ENCODE measurements at regions of chr3 and their contacts with region 1.

Region 1: GRCh38 chr3:19866751-19867347 is 67.2 kb downstream of the EFHB start:
- DNase-seq: peak in 4 of 5 donors; percentile 25 to 43 (median 30)
- H3K4me3 ChIP-seq: no peak overlapping the region
- H3K4me3 Mint-ChIP-seq: no peak overlapping the region
- H3K27ac ChIP-seq: no peak overlapping the region
- H3K27ac Mint-ChIP-seq: no peak overlapping the region
- H3K4me1 ChIP-seq: no peaks in the 10 kb centered on the region
- H3K4me1 Mint-ChIP-seq: peaks cover 0 to 4% (median 3%) of the 10 kb centered on the region in 4 donors
- H3K27me3 ChIP-seq: no peaks in the 10 kb centered on the region
- H3K27me3 Mint-ChIP-seq: peaks cover 0 to 10% of the 10 kb centered on the region in 2 donors

Region 2: DNA sequence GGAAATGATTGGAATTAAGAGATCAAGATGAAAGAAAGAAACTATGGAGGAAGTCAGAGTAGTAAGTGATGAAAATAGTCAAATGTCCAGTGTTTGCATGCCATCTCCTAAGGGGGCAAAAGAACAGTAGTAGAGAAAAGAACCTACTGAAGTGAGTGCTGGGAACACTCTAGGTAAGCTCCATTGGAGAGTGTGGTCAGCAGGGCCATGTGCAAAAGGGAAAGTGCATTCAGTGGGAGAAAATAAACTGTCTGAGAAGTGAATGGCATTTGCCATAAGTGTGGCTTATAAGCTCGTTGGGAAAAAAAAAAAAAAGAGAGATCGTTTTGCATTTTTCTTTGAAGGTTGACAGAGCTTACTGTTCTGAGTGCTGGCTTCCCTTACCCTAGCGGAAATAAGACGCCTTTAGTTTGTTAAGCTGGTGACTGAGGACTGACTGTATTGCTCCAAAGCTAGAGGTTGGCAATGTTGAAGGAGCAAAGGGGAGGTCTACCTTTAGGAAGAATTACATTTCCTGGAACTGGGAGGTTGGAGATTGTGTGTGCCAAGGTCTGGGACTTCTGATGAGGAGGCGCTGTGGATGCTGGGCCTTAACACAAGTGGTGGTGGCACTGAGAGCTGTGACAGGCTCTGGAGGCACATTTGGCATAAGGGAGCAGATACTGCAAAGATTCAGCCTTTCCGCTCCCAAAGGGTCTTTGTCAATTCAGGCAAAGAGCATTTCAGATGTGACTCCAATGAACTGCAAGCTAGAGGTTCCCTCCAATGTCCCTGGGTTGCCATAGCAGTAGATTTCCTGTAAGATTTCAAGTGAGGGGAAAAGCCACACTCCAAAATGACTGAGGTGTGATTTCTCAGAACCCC is 1153.9 kb before region 1 on chr3:
- CTCF ChIA-PET with region 1: no interaction called
- POLR2A ChIA-PET with region 1: no interaction called
- intact Hi-C with region 1: no loop called
- DNase-seq: peak in 4 of 5 donors; percentile 21 to 32 (median 27)
- H3K4me3 ChIP-seq: peak overlapping the region in 1 of 2 donors; percentile 6
- H3K4me3 Mint-ChIP-seq: peak overlapping the region in 7 of 8 donors; percentile 54 to 83 (median 68)
- H3K27ac ChIP-seq: no peak overlapping the region
- H3K27ac Mint-ChIP-seq: peak overlapping the region; percentile 74 to 96 (median 87)
- H3K4me1 ChIP-seq: peaks cover 52% of the 10 kb centered on the region
- H3K4me1 Mint-ChIP-seq: peaks cover 50 to 60% (median 53%) of the 10 kb centered on the region in 4 donors
- H3K27me3 ChIP-seq: no peaks in the 10 kb centered on the region
- H3K27me3 Mint-ChIP-seq: no peaks in the 10 kb centered on the region

Region 3: GRCh38 chr3:19046440-19046839 is 820.4 kb before region 1 on chr3:
- CTCF ChIA-PET with region 1: no interaction called
- POLR2A ChIA-PET with region 1: no interaction called
- intact Hi-C with region 1: loop called (anchors 1 kb)
- DNase-seq: no peak
- H3K4me3 ChIP-seq: no peak overlapping the region
- H3K4me3 Mint-ChIP-seq: no peak overlapping the region
- H3K27ac ChIP-seq: no peak overlapping the region
- H3K27ac Mint-ChIP-seq: no peak overlapping the region
- H3K4me1 ChIP-seq: no peaks in the 10 kb centered on the region
- H3K4me1 Mint-ChIP-seq: no peaks in the 10 kb centered on the region
- H3K27me3 ChIP-seq: no peaks in the 10 kb centered on the region
- H3K27me3 Mint-ChIP-seq: peaks cover 0 to 4% of the 10 kb centered on the region in 2 donors

Region 4: DNA sequence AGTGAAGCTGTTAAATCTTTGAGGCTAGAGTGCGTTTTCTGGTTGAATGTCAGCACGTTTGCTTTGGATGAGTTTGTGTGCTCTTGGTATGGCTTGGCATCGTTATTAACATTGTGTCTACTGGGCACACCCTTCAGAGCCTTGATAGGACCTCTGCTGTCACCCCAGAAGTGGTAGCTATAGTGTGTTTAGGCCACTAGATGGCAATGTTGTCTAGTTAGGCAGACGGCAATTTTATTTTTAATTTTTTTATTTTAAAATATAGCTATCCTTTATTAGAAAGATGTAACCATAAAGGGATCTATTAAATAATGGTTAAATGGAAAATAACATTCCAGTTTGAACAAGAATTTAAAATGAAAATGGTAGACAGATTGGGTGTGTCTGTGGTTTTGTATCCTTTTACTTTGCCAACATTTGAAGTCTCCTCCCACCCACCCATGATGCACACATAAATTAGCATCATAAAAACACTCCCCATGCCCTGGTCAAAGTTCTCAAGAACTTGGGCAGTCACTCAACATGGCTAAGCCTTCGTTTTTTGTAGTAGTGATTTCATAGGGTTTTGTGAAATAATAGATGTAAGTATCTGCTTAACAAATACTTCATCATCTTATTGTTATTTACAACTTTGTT is 517.8 kb before region 1 on chr3:
- CTCF ChIA-PET with region 1: no interaction called
- POLR2A ChIA-PET with region 1: no interaction called
- intact Hi-C with region 1: loop called (anchors 5 kb)
- DNase-seq: peak in 2 of 5 donors; percentile 1 to 14
- H3K4me3 ChIP-seq: no peak overlapping the region
- H3K4me3 Mint-ChIP-seq: no peak overlapping the region
- H3K27ac ChIP-seq: no peak overlapping the region
- H3K27ac Mint-ChIP-seq: no peak overlapping the region
- H3K4me1 ChIP-seq: no peaks in the 10 kb centered on the region
- H3K4me1 Mint-ChIP-seq: peaks cover 0 to 2% (median 0%) of the 10 kb centered on the region in 4 donors
- H3K27me3 ChIP-seq: no peaks in the 10 kb centered on the region
- H3K27me3 Mint-ChIP-seq: peaks cover 0 to 1% of the 10 kb centered on the region in 2 donors

Region 5: GRCh38 chr3:19877656-19878055 is 10.8 kb after region 1 on chr3:
- CTCF ChIA-PET with region 1: interaction called, 17 read pairs
- POLR2A ChIA-PET with region 1: no interaction called
- intact Hi-C with region 1: no loop called
- DNase-seq: no peak
- H3K4me3 ChIP-seq: no peak overlapping the region
- H3K4me3 Mint-ChIP-seq: no peak overlapping the region
- H3K27ac ChIP-seq: no peak overlapping the region
- H3K27ac Mint-ChIP-seq: no peak overlapping the region
- H3K4me1 ChIP-seq: no peaks in the 10 kb centered on the region
- H3K4me1 Mint-ChIP-seq: no peaks in the 10 kb centered on the region
- H3K27me3 ChIP-seq: no peaks in the 10 kb centered on the region
- H3K27me3 Mint-ChIP-seq: peaks cover 4 to 12% of the 10 kb centered on the region in 2 donors

Region 6: DNA sequence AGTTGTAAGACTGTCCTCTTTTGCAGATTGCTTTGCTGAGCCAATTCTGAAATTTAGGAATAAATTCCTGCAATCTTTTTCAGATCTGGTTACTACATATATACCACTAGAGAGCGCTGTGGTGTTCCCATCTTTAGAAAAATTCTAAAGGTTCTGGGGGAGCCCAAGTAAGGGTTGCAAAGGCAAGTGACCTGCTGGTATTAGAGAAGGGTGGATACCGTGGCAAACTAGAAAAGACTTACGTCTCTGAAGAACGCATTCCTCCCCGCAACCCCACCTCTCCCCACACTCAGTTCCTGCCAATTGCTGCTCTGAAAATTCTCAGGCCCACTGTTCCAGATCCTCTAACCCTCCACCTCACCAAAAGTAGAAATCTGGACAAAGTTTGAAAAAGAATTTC is 18.6 kb after region 1 on chr3:
- CTCF ChIA-PET with region 1: interaction called, 11 read pairs
- POLR2A ChIA-PET with region 1: no interaction called
- intact Hi-C with region 1: no loop called
- DNase-seq: peak in 4 of 5 donors; percentile 9 to 22 (median 18)
- H3K4me3 ChIP-seq: no peak overlapping the region
- H3K4me3 Mint-ChIP-seq: no peak overlapping the region
- H3K27ac ChIP-seq: no peak overlapping the region
- H3K27ac Mint-ChIP-seq: no peak overlapping the region
- H3K4me1 ChIP-seq: no peaks in the 10 kb centered on the region
- H3K4me1 Mint-ChIP-seq: no peaks in the 10 kb centered on the region
- H3K27me3 ChIP-seq: no peaks in the 10 kb centered on the region
- H3K27me3 Mint-ChIP-seq: peaks cover 0 to 2% of the 10 kb centered on the region in 2 donors

Measured in CD4-positive, alpha-beta memory T cell (primary cell).